Activated B cell treated with CpG ODN at 0.5 μM for 24 hours (primary cell): ENCODE measurements at regions of chr19 and their contacts with region 1.

Region 1: DNA sequence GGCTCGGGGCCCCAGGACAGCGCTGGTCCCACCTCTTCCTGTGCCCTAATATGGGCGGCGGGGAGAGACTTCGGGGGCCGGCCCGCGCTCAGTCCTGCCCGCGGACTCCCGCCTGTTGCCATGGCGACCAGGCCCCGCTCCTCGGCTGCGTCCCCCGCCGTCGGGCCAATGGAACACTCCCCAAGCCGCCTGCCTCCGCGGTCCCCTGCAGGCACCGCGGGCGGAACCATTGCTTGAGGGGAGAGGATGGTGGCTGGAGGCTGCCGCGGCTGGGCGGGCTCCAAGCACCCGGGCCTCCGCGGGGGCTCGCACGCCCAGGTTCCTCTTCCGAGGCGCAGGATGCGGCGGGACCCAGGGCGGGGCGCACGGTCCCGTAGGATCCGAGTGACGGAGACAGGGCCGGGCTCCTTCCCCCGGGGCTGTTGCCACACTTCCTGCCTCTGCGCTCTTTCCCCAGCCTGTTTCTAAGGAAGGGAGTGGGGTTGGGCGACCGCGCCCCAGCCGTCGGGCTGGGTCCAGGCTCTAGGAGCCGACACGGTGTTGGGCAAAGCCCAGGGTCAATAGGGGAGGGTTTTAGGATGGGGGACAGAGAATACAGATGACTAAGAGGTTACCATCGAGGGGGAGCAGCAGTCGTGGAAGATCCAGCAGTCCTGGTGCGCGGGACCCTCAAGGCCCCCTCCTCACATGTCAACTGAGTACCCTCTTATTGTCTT is 1.2 kb upstream of the JUNB start:
- DNase-seq: peak; percentile 95
- ATAC-seq: peak; percentile 43
- H3K4me3 Mint-ChIP-seq: peak overlapping the region; percentile 96
- H3K27ac Mint-ChIP-seq: peak overlapping the region; percentile 97
- H3K4me1 Mint-ChIP-seq: peaks cover 52% of the 10 kb centered on the region
- H3K27me3 Mint-ChIP-seq: no peaks in the 10 kb centered on the region
- CTCF ChIP-seq: no peak

Region 2: GRCh38 chr19:12666265-12667048 is 123.6 kb before region 1 on chr19 and contains the starts of genes MAN2B1 and WDR83:
- CTCF ChIA-PET with region 1: interaction called, 3 read pairs
- POLR2A ChIA-PET with region 1: interaction called, 12 read pairs
- intact Hi-C with region 1: no loop called
- DNase-seq: peak; percentile 83
- ATAC-seq: peak; percentile 70
- H3K4me3 Mint-ChIP-seq: peak within 1 kb of the TSS; percentile 97
- H3K27ac Mint-ChIP-seq: peak within 1 kb of the TSS; percentile 93
- H3K4me1 Mint-ChIP-seq: peaks cover 69% of the 10 kb centered on the region
- H3K27me3 Mint-ChIP-seq: no peaks in the 10 kb centered on the region
- CTCF ChIP-seq: no peak
- total RNA-seq, gene MAN2B1: 251 and 291 TPM in 2 replicates
- total RNA-seq, gene WDR83: 17.7 and 20.8 TPM in 2 replicates

Region 3: DNA sequence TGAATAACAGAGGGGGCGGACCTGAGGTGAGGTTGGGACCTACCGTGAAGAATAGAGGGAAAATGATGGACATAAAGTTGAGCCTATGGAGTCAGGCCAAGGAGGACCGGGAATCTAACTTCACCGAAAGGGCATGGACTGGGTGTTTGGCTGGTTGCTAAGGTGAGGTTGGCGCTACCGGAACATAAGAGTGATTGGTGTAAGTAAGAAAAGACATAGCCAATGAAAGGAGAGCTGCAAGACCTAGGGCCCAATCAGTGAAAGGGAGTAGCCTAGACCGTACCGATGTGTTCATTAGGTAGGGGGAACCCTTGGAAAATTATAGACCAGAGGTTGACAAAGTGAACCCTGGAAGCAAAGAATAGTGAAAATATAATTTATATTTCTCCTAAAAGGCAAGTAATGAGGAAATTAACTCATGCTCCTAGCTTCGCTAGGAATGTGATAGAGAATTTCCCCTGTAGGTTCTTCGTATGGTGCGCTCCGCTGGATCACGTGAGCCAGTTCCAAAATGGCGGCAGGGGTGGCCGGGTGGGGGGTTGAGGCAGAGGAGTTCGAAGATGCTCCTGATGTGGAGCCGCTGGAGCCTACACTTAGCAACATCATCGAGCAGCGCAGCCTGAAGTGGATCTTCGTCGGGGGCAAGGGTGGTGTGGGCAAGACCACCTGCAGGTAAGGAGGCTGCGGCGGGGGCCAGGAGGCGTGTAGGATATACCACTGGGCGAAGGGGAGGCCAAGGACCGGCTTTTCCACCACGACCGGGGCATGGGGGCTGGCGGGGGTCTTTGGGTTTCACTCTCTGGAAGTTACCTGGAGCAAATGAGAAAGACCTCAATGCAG is 52.8 kb before region 1 on chr19 and contains the start of gene GET3:
- CTCF ChIA-PET with region 1: no interaction called
- POLR2A ChIA-PET with region 1: interaction called, 25 read pairs
- intact Hi-C with region 1: no loop called
- DNase-seq: peak; percentile 66
- ATAC-seq: peak; percentile 79
- H3K4me3 Mint-ChIP-seq: peak within 1 kb of the TSS; percentile 99
- H3K27ac Mint-ChIP-seq: peak within 1 kb of the TSS; percentile 95
- H3K4me1 Mint-ChIP-seq: peaks cover 40% of the 10 kb centered on the region
- H3K27me3 Mint-ChIP-seq: no peaks in the 10 kb centered on the region
- CTCF ChIP-seq: no peak
- total RNA-seq, gene GET3: 59.6 and 63.5 TPM in 2 replicates

Region 4: GRCh38 chr19:12766051-12766521 is 24.0 kb before region 1 on chr19:
- CTCF ChIA-PET with region 1: interaction called, 280 read pairs
- POLR2A ChIA-PET with region 1: interaction called, 80 read pairs
- intact Hi-C with region 1: no loop called
- DNase-seq: peak; percentile 84
- ATAC-seq: peak; percentile 68
- H3K4me3 Mint-ChIP-seq: peak overlapping the region; percentile 32
- H3K27ac Mint-ChIP-seq: no peak overlapping the region
- H3K4me1 Mint-ChIP-seq: peaks cover 12% of the 10 kb centered on the region
- H3K27me3 Mint-ChIP-seq: no peaks in the 10 kb centered on the region
- CTCF ChIP-seq: peak; percentile 34

Region 5: GRCh38 chr19:12806239-12807081 is 16.4 kb after region 1 on chr19 and contains the start of gene RNASEH2A:
- CTCF ChIA-PET with region 1: interaction called, 6 read pairs
- POLR2A ChIA-PET with region 1: interaction called, 21 read pairs
- intact Hi-C with region 1: loop called (anchors 1 kb)
- DNase-seq: peak; percentile 86
- ATAC-seq: peak; percentile 93
- H3K4me3 Mint-ChIP-seq: peak within 1 kb of the TSS; percentile 92
- H3K27ac Mint-ChIP-seq: peak within 1 kb of the TSS; percentile 86
- H3K4me1 Mint-ChIP-seq: peaks cover 23% of the 10 kb centered on the region
- H3K27me3 Mint-ChIP-seq: peaks cover 5% of the 10 kb centered on the region
- CTCF ChIP-seq: no peak
- total RNA-seq, gene RNASEH2A: 13.4 and 22.1 TPM in 2 replicates

Region 6: DNA sequence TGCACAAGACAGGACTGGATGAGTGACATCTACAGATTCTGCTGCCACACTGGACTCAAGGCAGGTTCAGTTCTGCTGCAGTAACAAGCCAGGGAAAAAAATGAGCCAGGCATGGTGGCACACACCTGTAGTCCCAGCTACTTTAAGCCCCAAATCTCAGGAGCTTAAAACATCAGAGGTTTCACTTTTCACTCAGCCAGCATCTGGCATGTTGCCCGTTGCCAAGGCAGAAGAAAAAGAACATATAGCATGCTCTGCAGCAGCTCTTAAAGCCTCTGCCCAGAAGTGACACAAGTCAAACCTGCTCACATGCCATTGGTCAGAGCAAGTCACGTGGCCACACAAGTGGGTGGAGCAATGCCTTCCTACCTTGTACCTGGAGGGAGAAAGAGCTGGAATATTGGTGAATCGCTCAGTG is 1576.4 kb after region 1 on chr19:
- CTCF ChIA-PET with region 1: no interaction called
- POLR2A ChIA-PET with region 1: interaction called, 10 read pairs
- intact Hi-C with region 1: no loop called
- DNase-seq: peak; percentile 63
- ATAC-seq: peak; percentile 38
- H3K4me3 Mint-ChIP-seq: peak overlapping the region; percentile 22
- H3K27ac Mint-ChIP-seq: peak overlapping the region; percentile 93
- H3K4me1 Mint-ChIP-seq: peaks cover 77% of the 10 kb centered on the region
- H3K27me3 Mint-ChIP-seq: no peaks in the 10 kb centered on the region
- CTCF ChIP-seq: no peak